Activated naive CD4-positive, alpha-beta T cell treated with anti-CD3 and anti-CD28 coated beads for 36 hours (primary cell): ENCODE measurements at regions of chr3 and their contacts with region 1.

Region 1: GRCh38 chr3:30199096-30199759 is 407.2 kb upstream of the TGFBR2 start:
- DNase-seq: peak; percentile 89
- H3K4me3 Mint-ChIP-seq: no peak overlapping the region
- H3K27ac Mint-ChIP-seq: no peak overlapping the region
- H3K4me1 Mint-ChIP-seq: peaks cover 6% of the 10 kb centered on the region
- H3K27me3 Mint-ChIP-seq: no peaks in the 10 kb centered on the region

Region 2: GRCh38 chr3:28667646-28668621 is 1531.3 kb before region 1 on chr3:
- CTCF ChIA-PET with region 1: no interaction called
- intact Hi-C with region 1: loop called (anchors 5 kb)
- DNase-seq: peak; percentile 69
- H3K4me3 Mint-ChIP-seq: no peak overlapping the region
- H3K27ac Mint-ChIP-seq: no peak overlapping the region
- H3K4me1 Mint-ChIP-seq: peaks cover 3% of the 10 kb centered on the region
- H3K27me3 Mint-ChIP-seq: peaks cover 6% of the 10 kb centered on the region

Region 3: DNA sequence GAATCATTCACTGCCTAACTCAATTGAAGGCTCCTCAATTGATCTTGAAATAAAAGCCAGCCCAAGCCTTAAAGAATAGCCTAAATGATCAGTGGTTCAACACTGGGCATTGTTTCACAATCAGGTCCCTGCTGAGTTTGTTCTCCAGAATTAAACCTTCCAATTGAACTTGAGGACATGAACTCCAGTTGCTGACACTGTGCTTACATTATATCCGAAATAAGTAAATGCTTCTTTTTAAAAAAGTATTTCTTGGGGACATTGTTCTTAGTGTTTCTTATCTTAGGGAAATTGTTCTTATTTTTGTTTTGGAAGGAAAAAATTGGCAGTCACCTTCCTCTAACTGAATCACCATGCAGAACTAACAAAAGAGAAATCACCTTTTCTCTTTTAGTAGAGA is 468.2 kb before region 1 on chr3:
- CTCF ChIA-PET with region 1: no interaction called
- intact Hi-C with region 1: no loop called
- DNase-seq: no peak
- H3K4me3 Mint-ChIP-seq: no peak overlapping the region
- H3K27ac Mint-ChIP-seq: no peak overlapping the region
- H3K4me1 Mint-ChIP-seq: no peaks in the 10 kb centered on the region
- H3K27me3 Mint-ChIP-seq: peaks cover 3% of the 10 kb centered on the region

Region 4: GRCh38 chr3:30012941-30013543 is 186.2 kb before region 1 on chr3:
- CTCF ChIA-PET with region 1: interaction called, 6 read pairs
- intact Hi-C with region 1: loop called (anchors 1 kb)
- DNase-seq: peak; percentile 72
- H3K4me3 Mint-ChIP-seq: no peak overlapping the region
- H3K27ac Mint-ChIP-seq: no peak overlapping the region
- H3K4me1 Mint-ChIP-seq: no peaks in the 10 kb centered on the region
- H3K27me3 Mint-ChIP-seq: no peaks in the 10 kb centered on the region

Region 5: GRCh38 chr3:30112902-30113484 is 86.2 kb before region 1 on chr3:
- CTCF ChIA-PET with region 1: interaction called, 43 read pairs
- intact Hi-C with region 1: loop called (anchors 1 kb)
- DNase-seq: no peak
- H3K4me3 Mint-ChIP-seq: no peak overlapping the region
- H3K27ac Mint-ChIP-seq: no peak overlapping the region
- H3K4me1 Mint-ChIP-seq: peaks cover 10% of the 10 kb centered on the region
- H3K27me3 Mint-ChIP-seq: no peaks in the 10 kb centered on the region

Region 6: GRCh38 chr3:30578479-30578878 is 379.3 kb after region 1 on chr3:
- CTCF ChIA-PET with region 1: no interaction called
- intact Hi-C with region 1: no loop called
- DNase-seq: no peak
- H3K4me3 Mint-ChIP-seq: no peak overlapping the region
- H3K27ac Mint-ChIP-seq: no peak overlapping the region
- H3K4me1 Mint-ChIP-seq: peaks cover 12% of the 10 kb centered on the region
- H3K27me3 Mint-ChIP-seq: no peaks in the 10 kb centered on the region